H1 (cell line): ENCODE measurements at regions of chr1 and their contacts with region 1.

Region 1: GRCh38 chr1:201895913-201896807 is 7.5 kb downstream of the SHISA4 start:
- DNase-seq: peak; percentile 86 to 98
- H3K4me3 ChIP-seq: no peak overlapping the region
- H3K27ac ChIP-seq: no peak overlapping the region
- H3K4me1 ChIP-seq: peaks cover 6 to 21% (median 16%) of the 10 kb centered on the region in 4 experiments
- H3K27me3 ChIP-seq: no peaks in the 10 kb centered on the region
- CTCF ChIP-seq: peak; percentile 95 to 98 (median 96)
- EP300 ChIP-seq: peak in 1 of 2 experiments; percentile 59; a peak in 1 of 3 replicates
- POLR2A ChIP-seq: no peak
- RAD21 ChIP-seq: peak; percentile 98 to 99

Region 2: GRCh38 chr1:201877877-201878401 is 18.2 kb before region 1 on chr1:
- CTCF ChIA-PET with region 1: interaction called, 244 read pairs
- POLR2A ChIA-PET with region 1: interaction called, 117 read pairs
- DNase-seq: peak in 1 of 2 experiments; percentile 69
- H3K4me3 ChIP-seq: no peak overlapping the region
- H3K27ac ChIP-seq: no peak overlapping the region
- H3K4me1 ChIP-seq: peaks cover 0 to 4% (median 0%) of the 10 kb centered on the region in 4 experiments; a peak in 3 of 7 replicates
- H3K27me3 ChIP-seq: no peaks in the 10 kb centered on the region
- CTCF ChIP-seq: peak in 2 of 3 experiments; percentile 57 to 67; a peak in 3 of 4 replicates
- EP300 ChIP-seq: no peak
- POLR2A ChIP-seq: peak in 1 of 2 experiments; percentile 31; a peak in 2 of 3 replicates
- RAD21 ChIP-seq: peak; percentile 68 to 75

Region 3: DNA sequence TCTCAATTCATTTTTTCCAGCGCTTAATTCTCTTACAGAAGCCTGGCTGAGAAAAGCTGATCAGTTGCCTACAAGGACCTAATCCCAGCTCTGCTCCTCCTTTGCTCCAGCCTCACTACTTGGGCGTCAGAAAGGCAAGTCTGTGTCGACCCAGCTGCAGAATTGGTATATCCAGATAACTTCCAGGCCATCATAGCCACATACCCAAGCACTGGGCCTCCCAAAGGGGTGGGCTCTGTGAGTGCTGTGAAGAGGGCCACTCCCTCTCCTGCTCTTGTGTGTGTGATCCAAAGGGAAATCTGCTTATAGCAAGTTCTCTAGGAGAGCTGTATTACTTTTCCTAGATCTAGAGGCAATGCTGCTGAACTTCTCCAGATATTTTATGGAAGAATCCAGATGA is 32.1 kb after region 1 on chr1:
- CTCF ChIA-PET with region 1: interaction called, 19 read pairs
- POLR2A ChIA-PET with region 1: no interaction called
- DNase-seq: no peak
- H3K4me3 ChIP-seq: no peak overlapping the region
- H3K27ac ChIP-seq: no peak overlapping the region
- H3K4me1 ChIP-seq: no peaks in the 10 kb centered on the region
- H3K27me3 ChIP-seq: no peaks in the 10 kb centered on the region
- CTCF ChIP-seq: no peak
- EP300 ChIP-seq: no peak
- POLR2A ChIP-seq: no peak
- RAD21 ChIP-seq: no peak

Region 4: DNA sequence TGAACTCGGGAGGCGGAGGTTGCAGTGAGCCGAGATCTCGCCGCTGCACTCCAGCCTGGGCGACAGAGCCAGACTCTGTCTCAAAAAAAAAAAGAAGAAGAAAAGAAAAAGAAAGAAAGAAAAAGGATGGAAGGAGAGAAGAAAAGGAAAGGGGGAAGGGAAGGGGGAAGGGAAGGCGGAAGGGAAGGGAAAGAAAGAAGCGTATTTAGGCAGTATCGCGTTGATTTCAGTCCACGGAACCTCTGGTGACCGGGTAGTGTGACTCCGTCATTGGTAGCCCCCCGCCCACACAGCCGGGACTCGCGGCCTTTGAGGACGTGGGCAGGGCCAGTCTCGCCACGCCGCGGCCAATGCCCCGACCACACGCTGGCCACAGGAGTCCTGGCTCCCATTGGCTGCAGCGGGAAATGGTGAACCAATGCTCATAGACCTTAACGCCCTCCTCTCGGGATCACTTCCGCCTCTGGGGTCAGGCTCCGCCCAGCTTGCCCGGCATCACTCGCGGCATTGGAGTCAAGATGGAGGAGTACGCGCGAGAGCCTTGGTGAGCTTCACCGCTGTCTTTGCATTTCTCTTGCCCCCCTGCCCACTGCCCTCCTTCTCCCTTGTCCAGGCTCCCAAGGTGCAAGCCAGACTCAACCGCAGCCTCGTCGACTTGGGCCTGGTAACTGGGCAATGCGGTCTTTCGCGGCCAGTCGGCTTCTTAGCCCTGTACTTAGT is 59.0 kb after region 1 on chr1 and contains the start of gene TIMM17A:
- CTCF ChIA-PET with region 1: interaction called, 85 read pairs
- POLR2A ChIA-PET with region 1: interaction called, 22 read pairs
- DNase-seq: peak; percentile 77 to 93
- H3K4me3 ChIP-seq: peak within 1 kb of the TSS; percentile 83 to 100 (median 94)
- H3K27ac ChIP-seq: peak within 1 kb of the TSS; percentile 90
- H3K4me1 ChIP-seq: peaks cover 0 to 3% (median 0%) of the 10 kb centered on the region in 4 experiments; a peak in 1 of 7 replicates
- H3K27me3 ChIP-seq: no peaks in the 10 kb centered on the region
- CTCF ChIP-seq: no peak
- EP300 ChIP-seq: no peak
- POLR2A ChIP-seq: peak in 1 of 2 experiments; percentile 91
- RAD21 ChIP-seq: no peak; a peak in 1 of 4 replicates
- total RNA-seq, gene TIMM17A: 54.3 and 57.1 TPM in 2 replicates

Region 5: GRCh38 chr1:201982623-201983379 is 86.6 kb after region 1 on chr1 and contains the start of gene RNPEP:
- CTCF ChIA-PET with region 1: interaction called, 44 read pairs
- POLR2A ChIA-PET with region 1: interaction called, 9 read pairs
- DNase-seq: peak in 1 of 2 experiments; percentile 85
- H3K4me3 ChIP-seq: peak within 1 kb of the TSS; percentile 78 to 87 (median 82)
- H3K27ac ChIP-seq: peak within 1 kb of the TSS; percentile 13; the same call in 1 of the 2 replicates
- H3K4me1 ChIP-seq: peaks cover 0 to 4% (median 2%) of the 10 kb centered on the region in 4 experiments; a peak in 5 of 7 replicates
- H3K27me3 ChIP-seq: peaks cover 0 to 3% (median 0%) of the 10 kb centered on the region in 4 experiments; a peak in 1 of 7 replicates
- CTCF ChIP-seq: peak in 1 of 3 experiments; percentile 12; a peak in 1 of 4 replicates
- EP300 ChIP-seq: 0 out of 3 replicates have a peak, but pooled peaks of 1 of the 2 experiments have one; percentile 6
- POLR2A ChIP-seq: peak; percentile 6 to 68
- RAD21 ChIP-seq: no peak
- total RNA-seq, gene RNPEP: 45.2 and 51.1 TPM in 2 replicates

Region 6: GRCh38 chr1:202122639-202123335 is 226.6 kb after region 1 on chr1 and contains the start of gene GPR37L1:
- CTCF ChIA-PET with region 1: interaction called, 47 read pairs
- POLR2A ChIA-PET with region 1: interaction called, 3 read pairs
- DNase-seq: peak; percentile 56 to 81
- H3K4me3 ChIP-seq: no peak within 1 kb of the TSS
- H3K27ac ChIP-seq: no peak within 1 kb of the TSS
- H3K4me1 ChIP-seq: peaks cover 0 to 5% (median 4%) of the 10 kb centered on the region in 4 experiments; a peak in 6 of 7 replicates
- H3K27me3 ChIP-seq: no peaks in the 10 kb centered on the region
- CTCF ChIP-seq: peak; percentile 78 to 88 (median 83)
- EP300 ChIP-seq: no peak
- POLR2A ChIP-seq: no peak
- RAD21 ChIP-seq: peak; percentile 52 to 68
- total RNA-seq, gene GPR37L1: 0.08 and 0.13 TPM in 2 replicates